ENCODE measurements at regions of chr14 and their contacts with region 1.

Region 1: GRCh38 chr14:93788543-93789227 is 400 bp upstream of the PRIMA1 start:
- DNase-seq: peak; percentile 56 to 85
- ATAC-seq: peak; percentile 90
- H3K4me3 ChIP-seq: peak overlapping the region; percentile 53 to 56
- H3K27ac ChIP-seq: no peak overlapping the region
- H3K4me1 ChIP-seq: no peaks in the 10 kb centered on the region
- H3K27me3 ChIP-seq: no peaks in the 10 kb centered on the region

Region 2: GRCh38 chr14:93655078-93655750 is 133.5 kb before region 1 on chr14:
- intact Hi-C with region 1: loop called (anchors 2 kb)
- DNase-seq: no peak
- ATAC-seq: peak; percentile 70
- H3K4me3 ChIP-seq: no peak overlapping the region
- H3K27ac ChIP-seq: no peak overlapping the region
- H3K4me1 ChIP-seq: no peaks in the 10 kb centered on the region
- H3K27me3 ChIP-seq: no peaks in the 10 kb centered on the region

Region 3: DNA sequence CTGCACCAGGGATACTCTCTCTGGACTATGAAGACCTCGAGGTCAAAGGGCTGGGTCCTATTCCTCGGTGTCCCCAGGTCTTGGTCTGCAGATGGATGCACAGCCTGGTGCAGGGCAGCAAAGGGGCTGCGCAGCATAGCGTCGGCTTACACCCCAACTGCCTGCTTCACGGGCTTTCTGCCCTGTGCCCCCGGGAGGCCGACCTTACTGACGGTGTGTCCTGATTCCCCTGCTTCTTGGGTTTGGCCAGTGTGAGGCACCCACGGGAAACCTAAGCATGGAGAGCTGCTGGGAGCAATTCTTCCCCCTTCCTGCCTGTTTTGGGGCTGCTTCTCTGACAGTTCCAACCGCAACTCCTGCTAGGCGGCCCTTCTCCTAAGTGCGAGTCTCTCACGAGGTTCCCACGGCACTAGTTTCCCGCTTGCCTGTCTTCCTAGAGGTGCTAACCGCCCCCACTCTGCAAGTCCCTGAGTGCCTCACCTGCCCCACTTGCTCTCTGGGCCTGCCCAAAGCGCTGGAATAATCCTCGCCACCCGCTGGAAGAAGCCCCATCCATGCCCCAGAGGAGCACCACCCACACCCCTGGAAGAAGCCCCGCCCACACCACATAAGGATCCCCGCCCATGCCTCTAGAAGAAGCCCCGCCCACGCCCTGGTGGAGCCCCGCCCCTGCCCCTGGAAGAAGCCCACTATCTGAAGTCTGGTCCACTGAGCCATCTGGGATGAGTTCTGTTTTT is 54.4 kb before region 1 on chr14:
- intact Hi-C with region 1: loop called in 1 of 2 experiments (anchors 2 kb)
- DNase-seq: peak; percentile 33 to 78
- ATAC-seq: no peak
- H3K4me3 ChIP-seq: no peak overlapping the region
- H3K27ac ChIP-seq: no peak overlapping the region
- H3K4me1 ChIP-seq: no peaks in the 10 kb centered on the region
- H3K27me3 ChIP-seq: no peaks in the 10 kb centered on the region

Region 4: DNA sequence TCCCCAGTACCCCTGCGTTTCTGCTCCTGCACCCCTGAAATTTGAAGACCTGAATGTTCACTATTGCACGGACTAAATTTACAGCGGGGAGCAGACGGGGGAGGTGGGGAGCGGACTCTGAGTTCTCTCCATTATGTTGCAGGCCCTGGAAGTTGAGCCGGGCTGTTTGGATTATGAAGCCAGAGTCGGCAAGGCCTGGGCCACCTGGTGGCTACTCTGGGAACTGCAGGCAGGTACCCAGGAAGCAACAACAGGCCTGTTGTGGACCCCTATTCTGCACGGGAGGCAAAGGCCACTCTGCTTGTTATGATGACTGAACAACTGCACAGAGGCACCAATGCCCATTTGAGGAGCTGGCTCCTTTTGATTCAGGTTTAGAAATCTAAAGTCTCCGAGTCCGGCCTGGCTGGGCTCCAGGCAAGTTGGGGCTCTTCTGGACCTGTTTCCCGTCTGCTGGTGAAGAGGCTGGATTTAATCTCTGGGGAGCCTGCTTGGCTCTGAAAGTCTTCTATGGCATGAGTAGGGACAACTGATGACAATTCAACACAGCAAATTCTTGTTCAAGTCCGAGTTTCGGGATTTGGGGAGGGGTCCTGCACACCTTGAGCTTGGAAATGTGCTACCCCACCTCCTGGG is 104.4 kb after region 1 on chr14:
- intact Hi-C with region 1: loop called (anchors 5 kb)
- DNase-seq: peak; percentile 74 to 94
- ATAC-seq: peak; percentile 82
- H3K4me3 ChIP-seq: no peak overlapping the region
- H3K27ac ChIP-seq: no peak overlapping the region
- H3K4me1 ChIP-seq: no peaks in the 10 kb centered on the region
- H3K27me3 ChIP-seq: no peaks in the 10 kb centered on the region